ENCODE measurements at regions of chr17 and their contacts with region 1.

Region 1: DNA sequence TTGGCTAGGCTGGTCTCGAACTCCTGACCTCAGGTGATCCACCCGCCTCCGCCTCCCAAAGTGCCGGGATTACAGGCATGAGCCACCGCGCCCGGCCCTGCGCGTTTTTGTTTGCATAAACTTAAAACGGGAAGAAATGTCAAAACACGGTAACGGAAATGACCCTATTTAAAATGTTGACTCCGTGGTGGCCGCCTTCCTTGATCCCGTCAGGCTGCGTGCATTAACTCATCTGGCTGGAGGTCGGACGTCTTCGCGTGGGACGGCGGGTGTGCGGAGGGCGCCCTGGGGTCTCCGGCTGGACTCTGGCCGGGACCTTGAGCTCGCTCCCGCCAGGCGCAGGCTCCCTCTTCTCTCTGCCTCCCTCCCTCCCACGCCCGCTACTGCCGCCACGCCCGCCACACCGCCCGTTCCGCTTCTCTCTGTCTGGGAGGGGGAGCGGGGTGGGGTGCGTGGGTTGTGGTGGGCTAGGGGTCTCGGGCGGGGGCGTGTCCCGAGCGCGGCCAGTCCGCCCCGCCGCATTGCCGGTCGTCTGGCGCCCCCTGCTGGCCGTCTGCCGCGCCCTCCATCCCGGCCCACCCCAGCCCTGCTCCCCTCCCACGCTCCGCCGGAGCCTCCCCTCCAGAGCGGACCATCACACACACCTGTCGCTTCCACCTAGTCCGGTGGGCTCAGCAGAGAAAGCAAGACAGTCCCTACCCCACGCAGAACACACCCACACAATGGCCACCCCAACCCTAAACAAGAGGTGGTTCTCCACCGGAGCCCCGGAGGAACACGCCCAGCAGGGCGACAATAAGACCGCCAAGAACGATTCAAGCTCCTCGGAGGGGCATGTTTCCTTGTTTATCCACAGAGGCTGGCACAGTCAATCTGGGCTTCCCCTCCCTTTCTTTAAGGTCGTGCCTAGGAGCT is 1.2 kb upstream of the CCDC42 start:
- DNase-seq: peak; percentile 27 to 94
- H3K4me3 ChIP-seq: peak overlapping the region; percentile 23
- CTCF ChIP-seq: no peak
- POLR2A ChIP-seq: no peak

Region 2: DNA sequence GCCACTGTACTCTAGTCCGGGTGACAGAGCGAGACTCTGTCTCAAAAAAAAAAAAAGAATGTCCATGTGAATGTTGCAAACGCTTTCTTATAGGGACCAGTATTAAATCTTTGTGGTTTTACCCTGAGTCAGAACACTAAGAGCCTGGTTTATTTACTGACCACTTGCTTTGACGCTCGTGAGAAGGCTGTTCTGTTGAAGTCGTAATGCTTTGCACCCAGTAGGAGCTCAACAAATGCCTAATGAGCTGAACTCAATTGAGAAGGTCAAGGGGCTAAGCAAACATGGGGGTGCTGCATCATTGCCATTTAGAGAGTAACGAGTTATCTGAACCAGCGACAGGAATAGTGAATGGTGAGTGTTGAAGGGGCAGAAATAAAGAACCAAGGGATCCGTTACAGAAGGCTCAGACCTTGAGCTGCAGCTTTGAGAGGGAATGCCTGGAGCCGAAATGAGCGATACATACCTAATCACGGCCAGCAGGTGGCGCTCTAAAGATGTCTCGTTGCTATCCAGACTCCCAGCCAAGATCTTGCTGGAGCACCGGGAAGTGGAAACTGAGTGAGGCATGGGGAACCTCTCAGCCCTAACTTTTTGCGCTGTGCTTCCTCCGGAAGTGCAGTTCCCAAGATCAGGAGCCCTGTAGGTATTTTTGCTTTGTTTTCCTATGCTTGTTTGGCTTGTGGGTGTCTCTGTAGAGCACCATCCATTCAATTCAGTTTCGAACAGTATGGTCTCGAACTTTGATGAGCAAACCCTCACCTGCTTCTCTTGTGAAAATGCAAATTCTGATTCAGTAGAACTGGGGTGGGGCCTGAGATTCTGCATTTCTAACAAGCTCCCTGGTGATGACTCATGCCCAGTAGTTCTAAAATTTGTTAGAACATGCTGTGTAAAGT is 335.6 kb before region 1 on chr17:
- intact Hi-C with region 1: loop called (anchors 10 kb)
- DNase-seq: peak; percentile 82 to 97
- H3K4me3 ChIP-seq: no peak overlapping the region
- CTCF ChIP-seq: peak in 1 of 3 donors; percentile 73
- POLR2A ChIP-seq: no peak

Region 3: DNA sequence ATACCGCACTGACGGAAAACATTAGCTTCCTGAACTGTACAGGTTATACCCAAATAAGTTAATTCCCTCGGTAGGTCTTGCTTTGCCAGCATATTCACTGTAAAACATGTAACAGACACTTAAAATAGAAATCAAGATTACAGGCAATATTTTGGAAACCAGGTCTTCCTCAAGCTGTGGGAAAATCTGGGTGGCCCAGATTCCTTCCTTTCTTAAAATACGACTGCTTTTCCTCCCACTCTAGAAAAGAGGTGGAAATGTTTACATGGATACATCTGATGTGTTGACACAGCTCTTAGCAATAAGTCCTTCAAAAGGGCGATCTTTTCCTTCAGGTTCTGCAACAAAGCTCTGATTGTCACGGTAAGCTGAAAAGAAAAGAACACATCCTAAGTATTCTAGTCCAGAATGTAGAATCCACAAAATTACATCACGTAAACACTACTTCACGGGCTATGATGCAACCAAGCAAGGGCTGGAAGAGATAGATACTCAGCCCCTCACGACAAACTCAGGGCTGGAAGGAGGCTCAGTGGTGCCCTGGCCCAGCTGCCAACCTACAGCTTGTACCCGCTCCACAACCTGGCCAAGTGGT is 811.4 kb after region 1 on chr17:
- intact Hi-C with region 1: no loop called
- DNase-seq: no peak
- H3K4me3 ChIP-seq: no peak overlapping the region
- CTCF ChIP-seq: no peak
- POLR2A ChIP-seq: no peak